Activated CD4-positive, alpha-beta T cell treated with anti-CD3 and anti-CD28 coated beads for 36 hours (primary cell): ENCODE measurements at regions of chr17 and their contacts with region 1.

Region 1: DNA sequence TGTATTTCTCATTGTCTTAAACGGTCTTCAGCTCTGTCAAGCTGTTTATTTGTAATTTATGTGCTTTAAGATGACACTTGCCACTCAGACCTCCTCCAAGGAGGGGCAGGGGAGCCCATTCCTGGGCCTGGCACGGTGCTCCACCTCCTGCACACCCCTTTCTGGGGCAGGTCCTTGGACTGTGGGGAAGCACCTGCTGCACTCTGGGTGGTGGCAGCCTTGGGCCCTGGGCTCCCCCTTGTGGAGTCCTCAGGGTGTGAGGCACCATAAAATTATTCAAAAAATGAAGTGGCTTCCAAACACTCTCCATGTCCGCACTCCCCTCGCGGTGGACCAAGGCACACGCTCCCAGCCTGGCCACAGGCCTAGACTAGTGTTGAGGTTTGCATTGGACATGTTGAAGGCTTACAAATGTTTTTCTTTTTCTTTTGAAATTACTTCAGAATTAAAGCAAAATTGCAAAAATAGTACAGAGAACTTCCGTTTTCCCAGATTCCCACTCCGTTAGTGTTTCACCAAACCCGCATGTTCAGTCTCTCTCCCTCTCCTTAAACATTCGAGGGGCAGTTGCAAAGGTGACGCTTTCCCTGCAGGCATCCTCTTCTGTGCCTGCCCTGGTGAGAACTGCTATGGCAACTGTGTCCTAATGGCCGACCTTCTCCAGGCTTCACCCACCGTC is 32.4 kb downstream of the FOXK2 start:
- DNase-seq: peak; percentile 90
- ATAC-seq: peak; percentile 100
- H3K4me3 Mint-ChIP-seq: no peak overlapping the region
- H3K27ac Mint-ChIP-seq: peak overlapping the region; percentile 56
- H3K4me1 Mint-ChIP-seq: peaks cover 41% of the 10 kb centered on the region
- H3K27me3 Mint-ChIP-seq: no peaks in the 10 kb centered on the region

Region 2: GRCh38 chr17:82480318-82480717 is 71.6 kb before region 1 on chr17:
- CTCF ChIA-PET with region 1: interaction called, 6 read pairs
- POLR2A ChIA-PET with region 1: interaction called, 4 read pairs
- intact Hi-C with region 1: loop called in 1 of 2 experiments (anchors 1 kb)
- DNase-seq: no peak
- ATAC-seq: no peak
- H3K4me3 Mint-ChIP-seq: no peak overlapping the region
- H3K27ac Mint-ChIP-seq: no peak overlapping the region
- H3K4me1 Mint-ChIP-seq: peaks cover 4% of the 10 kb centered on the region
- H3K27me3 Mint-ChIP-seq: no peaks in the 10 kb centered on the region

Region 3: DNA sequence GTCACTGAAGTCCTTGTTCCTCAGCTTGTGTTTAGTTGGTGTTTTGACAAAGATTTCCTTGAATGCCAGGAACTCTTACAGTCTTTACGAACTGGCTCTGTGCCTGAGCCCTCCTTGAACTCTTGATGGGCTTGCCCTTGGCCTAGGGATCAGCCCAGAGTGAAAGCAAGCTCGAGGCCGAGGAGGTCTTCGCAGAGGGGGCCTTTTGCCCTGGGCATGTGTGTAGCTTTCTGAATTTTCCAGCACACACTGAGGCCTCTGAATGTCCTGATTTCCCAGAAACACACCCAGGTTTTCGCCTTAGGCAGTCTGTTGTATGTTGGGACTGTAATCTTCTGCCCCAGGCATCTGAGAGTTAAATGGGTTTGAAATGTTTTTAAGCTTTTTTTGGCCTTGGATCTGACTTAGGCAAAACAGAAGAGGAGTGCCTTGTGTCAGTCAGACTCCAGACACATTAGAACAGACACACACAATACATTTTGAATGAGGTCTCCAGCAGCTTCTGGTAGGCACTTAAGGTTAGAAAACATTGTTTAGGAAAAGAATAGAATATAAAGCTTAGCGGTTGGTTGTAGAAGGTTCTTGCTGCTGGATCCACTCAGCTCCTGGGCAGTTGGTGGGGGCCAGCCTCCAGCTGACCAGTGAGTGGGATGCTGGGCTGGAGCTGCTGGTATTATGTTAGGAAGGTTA is 15.3 kb before region 1 on chr17:
- CTCF ChIA-PET with region 1: interaction called, 33 read pairs
- POLR2A ChIA-PET with region 1: interaction called, 3 read pairs
- intact Hi-C with region 1: no loop called
- DNase-seq: no peak
- ATAC-seq: no peak
- H3K4me3 Mint-ChIP-seq: peak overlapping the region; percentile 33
- H3K27ac Mint-ChIP-seq: peak overlapping the region; percentile 86
- H3K4me1 Mint-ChIP-seq: peaks cover 51% of the 10 kb centered on the region
- H3K27me3 Mint-ChIP-seq: no peaks in the 10 kb centered on the region

Region 4: GRCh38 chr17:82716203-82717010 is 164.5 kb after region 1 on chr17 and contains the start of gene FN3KRP:
- CTCF ChIA-PET with region 1: no interaction called
- POLR2A ChIA-PET with region 1: no interaction called
- intact Hi-C with region 1: no loop called
- DNase-seq: peak; percentile 95
- ATAC-seq: peak; percentile 91
- H3K4me3 Mint-ChIP-seq: peak within 1 kb of the TSS; percentile 93
- H3K27ac Mint-ChIP-seq: peak within 1 kb of the TSS; percentile 88
- H3K4me1 Mint-ChIP-seq: peaks cover 10% of the 10 kb centered on the region
- H3K27me3 Mint-ChIP-seq: no peaks in the 10 kb centered on the region
- total RNA-seq, gene FN3KRP: 28.3 to 36.3 TPM

Region 5: GRCh38 chr17:82751571-82752370 is 199.9 kb after region 1 on chr17 and contains the start of gene TBCD:
- CTCF ChIA-PET with region 1: no interaction called
- POLR2A ChIA-PET with region 1: no interaction called
- intact Hi-C with region 1: no loop called
- DNase-seq: peak; percentile 95
- ATAC-seq: peak; percentile 83
- H3K4me3 Mint-ChIP-seq: peak within 1 kb of the TSS; percentile 84
- H3K27ac Mint-ChIP-seq: peak within 1 kb of the TSS; percentile 13
- H3K4me1 Mint-ChIP-seq: peaks cover 26% of the 10 kb centered on the region
- H3K27me3 Mint-ChIP-seq: no peaks in the 10 kb centered on the region
- total RNA-seq, gene TBCD: 83.3 to 97.2 TPM